ENCODE measurements at regions of chr2 and their contacts with region 1.

Region 1: GRCh38 chr2:151334082-151334815 is 23.1 kb upstream of the TNFAIP6 start:
- DNase-seq: peak in 1 of 3 donors; percentile 15
- H3K4me3 ChIP-seq: no peak overlapping the region
- H3K4me3 Mint-ChIP-seq: no peak overlapping the region
- H3K27ac ChIP-seq: peak overlapping the region in 1 of 2 donors; percentile 10
- H3K27ac Mint-ChIP-seq: peak overlapping the region in 4 of 7 donors; percentile 50 to 70 (median 61)
- H3K4me1 ChIP-seq: peaks cover 23 to 46% of the 10 kb centered on the region in 2 donors
- H3K4me1 Mint-ChIP-seq: peaks cover 44% of the 10 kb centered on the region
- H3K27me3 ChIP-seq: no peaks in the 10 kb centered on the region
- H3K27me3 Mint-ChIP-seq: peaks cover 0 to under 1% (median 0%) of the 10 kb centered on the region in 3 donors
- CTCF ChIP-seq: no peak

Region 2: DNA sequence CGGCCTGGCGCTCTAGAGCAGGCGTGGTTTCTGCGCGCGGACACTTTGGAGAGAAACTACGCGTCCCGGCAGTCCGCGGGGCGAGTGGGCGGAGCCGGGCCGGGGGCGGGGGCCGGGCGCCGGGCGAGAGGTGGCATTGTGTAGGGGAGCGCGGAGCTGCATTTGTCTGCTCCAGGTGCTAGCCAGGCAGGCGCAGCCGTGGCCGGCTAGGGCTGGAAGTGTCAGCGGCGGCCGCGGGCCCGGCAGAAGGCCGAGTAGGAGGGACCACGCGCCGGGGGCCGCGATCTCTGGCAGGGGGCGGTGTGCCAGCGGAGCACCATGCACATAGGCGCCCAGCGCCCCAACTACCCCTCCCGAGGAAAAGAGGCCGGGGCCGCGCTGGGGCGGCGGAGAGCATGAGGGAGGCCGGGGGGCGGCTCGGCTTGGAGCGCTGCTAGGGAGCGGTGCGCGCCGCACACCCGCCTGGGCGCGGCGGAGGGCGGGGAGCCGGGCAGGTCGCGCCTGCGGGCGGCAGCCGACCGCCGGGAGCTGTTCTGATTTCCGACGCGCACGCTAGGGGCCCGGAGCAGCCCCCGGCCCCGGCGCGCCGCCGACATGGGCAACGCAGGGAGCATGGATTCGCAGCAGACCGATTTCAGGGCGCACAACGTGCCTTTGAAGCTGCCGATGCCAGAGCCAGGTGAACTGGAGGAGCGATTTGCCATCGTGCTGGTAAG is 1000.9 kb after region 1 on chr2 and contains the start of gene FMNL2:
- intact Hi-C with region 1: loop called in 1 of 2 experiments (anchors 10 kb)
- DNase-seq: peak; percentile 20 to 38 (median 23)
- H3K4me3 ChIP-seq: peak within 1 kb of the TSS; percentile 53 to 88 (median 76)
- H3K4me3 Mint-ChIP-seq: peak within 1 kb of the TSS; percentile 86 to 94
- H3K27ac ChIP-seq: no peak within 1 kb of the TSS
- H3K27ac Mint-ChIP-seq: peak within 1 kb of the TSS in 2 of 7 donors; percentile 26 to 68
- H3K4me1 ChIP-seq: peaks cover 13 to 21% of the 10 kb centered on the region in 2 donors
- H3K4me1 Mint-ChIP-seq: peaks cover 26% of the 10 kb centered on the region
- H3K27me3 ChIP-seq: peaks cover 26 to 39% of the 10 kb centered on the region in 2 donors
- H3K27me3 Mint-ChIP-seq: peaks cover 33 to 47% (median 37%) of the 10 kb centered on the region in 3 donors
- CTCF ChIP-seq: peak; percentile 10
- polyA plus RNA-seq, gene FMNL2: 0.28 to 3.2 (median 0.71) TPM

Measured in CD14-positive monocyte (primary cell).